Esophagus muscularis mucosa (tissue), 4 donors: ENCODE measurements at regions of chrX and their contacts with region 1.

Region 1: DNA sequence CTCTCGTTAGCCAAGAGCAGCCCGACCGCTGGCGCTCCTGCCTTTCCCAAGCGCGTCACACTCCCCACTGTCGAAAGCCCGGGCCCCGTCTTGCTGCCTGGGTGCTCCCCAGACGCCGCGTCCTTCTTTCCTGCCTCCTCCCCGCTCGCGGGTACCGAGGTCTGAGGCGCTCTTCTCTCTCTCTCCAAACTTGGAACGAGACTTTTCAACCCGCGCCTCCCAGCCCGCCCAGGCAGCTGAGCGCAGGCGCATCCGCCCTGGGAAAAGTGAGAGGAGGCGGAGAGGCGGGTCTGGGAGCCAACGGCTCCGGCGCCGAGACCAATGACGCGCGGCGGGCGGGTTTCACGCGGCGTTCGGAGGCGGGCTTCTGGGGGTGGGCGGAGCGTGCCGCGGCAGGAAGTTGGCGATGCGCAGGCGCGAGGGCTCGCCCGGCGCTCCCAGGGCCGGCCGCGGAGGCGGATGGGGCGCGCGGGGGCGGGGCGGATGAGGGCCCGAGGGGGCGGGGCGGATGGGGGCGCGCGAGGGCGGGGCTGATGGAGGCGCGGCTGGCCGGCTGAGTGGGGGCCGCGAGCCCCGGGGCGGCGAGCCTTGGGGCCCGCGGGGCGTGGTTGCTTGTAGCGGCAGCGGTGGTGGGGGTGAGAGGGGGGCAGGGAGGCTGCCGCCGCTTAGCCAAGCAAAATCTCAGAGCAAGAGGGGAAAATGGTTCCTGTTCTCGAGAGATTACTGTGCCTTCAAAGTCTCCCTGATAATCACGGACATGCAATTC is at the start of gene RBBP7:
- DNase-seq: peak; percentile 93
- H3K4me3 ChIP-seq: peak within 1 kb of the TSS; percentile 64 to 77 (median 68)
- H3K27ac ChIP-seq: peak within 1 kb of the TSS; percentile 88 to 93 (median 90)
- H3K4me1 ChIP-seq: peaks cover 11 to 61% (median 54%) of the 10 kb centered on the region in 4 donors
- H3K27me3 ChIP-seq: no peaks in the 10 kb centered on the region
- CTCF ChIP-seq: no peak
- EP300 ChIP-seq: no peak
- POLR2A ChIP-seq: peak; percentile 80
- total RNA-seq, gene RBBP7: 105 to 150 (median 125) TPM

Region 2: DNA sequence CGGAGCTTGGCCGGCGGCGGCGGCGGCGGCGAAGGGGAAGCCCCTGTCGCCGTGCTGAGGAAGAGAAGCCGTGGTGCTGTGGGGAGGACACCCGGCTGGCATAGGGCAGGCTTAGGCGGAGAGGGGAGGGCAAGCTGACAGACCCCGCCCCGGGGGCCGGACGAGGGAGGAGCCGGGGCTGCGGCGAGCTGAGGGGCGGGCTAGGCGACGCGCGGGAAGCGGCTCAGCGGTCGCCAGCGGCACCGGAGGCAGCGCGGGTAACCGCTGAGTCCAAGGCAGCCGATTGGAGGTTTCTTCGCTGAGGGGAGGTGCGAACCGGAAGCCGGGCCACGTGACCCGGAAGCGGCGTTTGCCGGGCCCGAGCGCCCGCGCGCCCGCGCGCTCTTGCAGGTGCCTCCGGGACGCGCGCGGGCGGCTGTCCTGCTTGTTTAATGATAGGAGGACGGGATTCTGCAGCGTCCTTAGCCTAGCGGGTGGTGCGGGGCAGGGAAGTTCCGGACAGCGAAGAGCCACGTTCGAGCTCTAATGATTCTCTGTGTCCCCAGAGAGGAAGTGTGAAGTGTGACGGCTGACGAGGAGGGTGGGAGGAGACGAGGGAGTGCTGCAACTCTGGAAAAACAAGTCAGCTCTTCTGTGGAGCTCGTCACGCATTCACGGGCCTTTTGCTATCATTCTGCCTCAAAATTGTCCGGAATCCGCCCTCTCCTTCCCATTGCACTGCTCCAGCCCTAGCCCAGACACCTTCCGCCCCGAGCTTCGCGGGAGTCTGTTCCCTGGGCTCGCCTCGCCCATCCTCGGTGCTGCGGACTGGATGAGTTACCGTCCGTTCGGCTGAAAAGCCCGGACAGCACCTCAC is 1015.3 kb before region 1 on chrX and contains the start of gene AP1S2:
- intact Hi-C with region 1: loop called (anchors 10 kb)
- DNase-seq: peak; percentile 94
- H3K4me3 ChIP-seq: peak within 1 kb of the TSS; percentile 75 to 93 (median 80)
- H3K27ac ChIP-seq: peak within 1 kb of the TSS; percentile 88 to 96 (median 95)
- H3K4me1 ChIP-seq: peaks cover 12 to 41% (median 28%) of the 10 kb centered on the region in 4 donors
- H3K27me3 ChIP-seq: no peaks in the 10 kb centered on the region
- CTCF ChIP-seq: no peak
- EP300 ChIP-seq: no peak
- POLR2A ChIP-seq: peak; percentile 55
- total RNA-seq, gene AP1S2: 136 to 142 (median 140) TPM

Region 3: GRCh38 chrX:16148896-16149295 is 721.4 kb before region 1 on chrX:
- intact Hi-C with region 1: no loop called
- DNase-seq: no peak
- H3K4me3 ChIP-seq: no peak overlapping the region
- H3K27ac ChIP-seq: no peak overlapping the region
- H3K4me1 ChIP-seq: peaks cover 0 to 4% (median 0%) of the 10 kb centered on the region in 4 donors
- H3K27me3 ChIP-seq: no peaks in the 10 kb centered on the region
- CTCF ChIP-seq: no peak
- EP300 ChIP-seq: no peak
- POLR2A ChIP-seq: no peak

Region 4: DNA sequence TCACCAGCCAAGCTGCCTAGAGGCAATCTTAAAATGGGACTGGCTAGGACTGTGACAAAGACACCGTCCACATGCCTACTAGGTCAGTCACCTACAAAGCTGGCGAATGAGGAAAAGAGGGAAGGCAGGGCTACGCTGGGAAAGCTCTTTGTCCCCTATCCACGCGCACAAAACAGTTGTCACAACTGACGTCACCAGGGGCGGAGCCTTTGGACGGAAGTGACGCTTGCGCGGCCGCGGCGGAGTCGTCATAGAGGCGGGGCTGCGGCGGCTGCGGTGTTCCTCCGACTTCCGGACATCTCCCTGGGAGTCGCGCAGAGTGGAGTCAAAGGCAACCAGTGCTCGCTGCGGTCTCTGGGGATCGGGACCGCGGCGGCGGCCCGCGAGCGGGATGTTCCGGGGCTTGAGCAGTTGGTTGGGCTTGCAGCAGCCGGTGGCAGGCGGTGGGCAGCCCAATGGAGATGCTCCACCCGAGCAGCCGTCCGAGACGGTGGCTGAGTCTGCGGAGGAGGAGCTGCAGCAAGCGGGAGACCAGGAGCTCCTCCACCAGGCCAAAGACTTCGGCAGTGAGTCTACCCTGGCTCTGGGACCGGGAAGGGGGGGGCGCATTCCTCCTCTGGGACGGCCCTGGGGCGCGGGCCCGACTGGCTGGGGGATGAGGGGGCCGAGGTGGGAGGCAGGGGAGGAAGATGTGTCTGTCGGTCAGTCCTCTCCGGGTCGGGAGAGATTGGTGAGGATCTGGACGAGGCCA is 150.8 kb before region 1 on chrX and contains the start of gene SYAP1:
- intact Hi-C with region 1: loop called (anchors 10 kb)
- DNase-seq: peak; percentile 98
- H3K4me3 ChIP-seq: peak within 1 kb of the TSS; percentile 62 to 84 (median 78)
- H3K27ac ChIP-seq: peak within 1 kb of the TSS; percentile 92 to 94 (median 92)
- H3K4me1 ChIP-seq: peaks cover 10 to 28% (median 20%) of the 10 kb centered on the region in 4 donors
- H3K27me3 ChIP-seq: no peaks in the 10 kb centered on the region
- CTCF ChIP-seq: peak in 1 of 3 experiments; percentile 3
- EP300 ChIP-seq: no peak
- POLR2A ChIP-seq: peak; percentile 87
- total RNA-seq, gene SYAP1: 22.5 to 30.9 (median 28.5) TPM

Region 5: DNA sequence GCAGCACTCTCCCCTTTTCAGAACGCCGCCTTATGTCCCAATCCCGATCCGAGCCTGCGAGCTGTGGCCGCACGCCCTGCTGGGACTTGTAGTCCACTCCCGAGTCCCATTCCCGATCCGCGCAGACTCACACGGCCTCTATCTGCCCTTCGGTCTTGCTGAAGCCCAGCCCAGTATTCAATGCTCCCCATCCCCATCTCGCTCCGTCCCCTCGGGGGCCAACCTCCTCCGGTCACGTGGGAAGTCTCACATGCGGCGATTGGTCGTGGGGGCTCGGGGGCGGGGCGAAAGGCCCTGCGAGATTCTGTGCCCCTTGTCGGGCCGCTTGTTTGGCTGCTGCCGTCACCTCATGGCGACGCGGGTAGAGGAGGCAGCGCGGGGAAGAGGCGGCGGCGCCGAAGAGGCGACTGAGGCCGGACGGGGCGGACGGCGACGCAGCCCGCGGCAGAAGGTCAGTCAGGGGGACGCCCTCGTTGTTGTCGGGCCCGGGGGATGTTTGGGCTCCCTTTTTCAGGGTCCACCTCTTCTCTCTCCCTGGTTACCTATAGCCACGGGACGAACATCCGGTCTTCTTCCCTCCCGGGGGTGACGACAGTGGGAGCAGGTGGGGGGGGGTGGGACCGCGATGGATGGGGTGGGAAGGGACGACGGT is 84.0 kb before region 1 on chrX and contains the start of gene TXLNG:
- intact Hi-C with region 1: loop called (anchors 5 kb)
- DNase-seq: peak; percentile 98
- H3K4me3 ChIP-seq: peak within 1 kb of the TSS; percentile 72 to 97 (median 80)
- H3K27ac ChIP-seq: peak within 1 kb of the TSS; percentile 88 to 94 (median 90)
- H3K4me1 ChIP-seq: peaks cover 11 to 26% (median 16%) of the 10 kb centered on the region in 4 donors
- H3K27me3 ChIP-seq: no peaks in the 10 kb centered on the region
- CTCF ChIP-seq: no peak
- EP300 ChIP-seq: no peak
- POLR2A ChIP-seq: peak; percentile 76
- total RNA-seq, gene TXLNG: 9.6 to 13.6 (median 11.9) TPM

Region 6: GRCh38 chrX:16826207-16826606 is 44.1 kb before region 1 on chrX:
- intact Hi-C with region 1: loop called (anchors 5 kb)
- DNase-seq: no peak
- H3K4me3 ChIP-seq: no peak overlapping the region
- H3K27ac ChIP-seq: peak overlapping the region in 3 of 4 donors; percentile 15 to 79 (median 71)
- H3K4me1 ChIP-seq: peaks cover 0 to 27% (median 17%) of the 10 kb centered on the region in 4 donors
- H3K27me3 ChIP-seq: no peaks in the 10 kb centered on the region
- CTCF ChIP-seq: peak; percentile 43 to 55 (median 52)
- EP300 ChIP-seq: no peak
- POLR2A ChIP-seq: no peak